ENCODE measurements at regions of chr9 and their contacts with region 1.

Region 1: DNA sequence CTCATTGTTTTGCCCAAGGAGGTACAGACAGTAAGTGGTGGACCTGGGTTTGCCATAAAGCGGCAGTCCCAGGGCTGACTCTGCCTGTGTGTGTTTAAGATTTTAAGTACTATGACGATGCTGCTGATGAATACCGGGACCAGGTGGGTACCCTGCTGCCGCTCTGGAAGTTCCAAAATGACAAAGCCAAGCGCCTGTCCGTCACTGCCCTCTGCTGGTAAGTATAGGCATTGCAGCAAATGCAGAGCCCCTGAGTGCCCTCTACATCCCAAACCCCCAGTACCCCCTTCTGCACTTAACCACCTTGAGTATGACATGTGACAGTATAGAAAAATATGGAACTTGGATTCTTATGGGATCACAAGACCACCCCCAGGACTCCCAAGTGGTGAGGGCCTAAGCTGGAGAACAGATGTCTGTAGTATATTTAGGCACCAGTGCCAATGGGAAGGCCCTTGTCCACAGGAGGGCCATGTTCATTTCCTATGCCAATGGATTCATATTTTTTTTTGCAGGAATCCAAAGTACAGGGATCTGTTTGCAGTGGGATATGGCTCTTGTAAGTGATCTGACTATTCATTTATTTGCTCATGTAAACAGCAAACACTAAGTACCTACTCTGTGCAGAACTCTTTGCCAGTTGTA is 22.0 kb downstream of the ENHO start:
- DNase-seq: no peak
- H3K4me3 ChIP-seq: no peak overlapping the region
- H3K27ac ChIP-seq: no peak overlapping the region
- H3K4me1 ChIP-seq: peaks cover 0 to 14% (median 4%) of the 10 kb centered on the region in 6 donors
- H3K27me3 ChIP-seq: peaks cover 0 to 17% (median 0%) of the 10 kb centered on the region in 7 donors
- CTCF ChIP-seq: peak; percentile 81 to 98 (median 95)
- POLR2A ChIP-seq: no peak

Region 2: DNA sequence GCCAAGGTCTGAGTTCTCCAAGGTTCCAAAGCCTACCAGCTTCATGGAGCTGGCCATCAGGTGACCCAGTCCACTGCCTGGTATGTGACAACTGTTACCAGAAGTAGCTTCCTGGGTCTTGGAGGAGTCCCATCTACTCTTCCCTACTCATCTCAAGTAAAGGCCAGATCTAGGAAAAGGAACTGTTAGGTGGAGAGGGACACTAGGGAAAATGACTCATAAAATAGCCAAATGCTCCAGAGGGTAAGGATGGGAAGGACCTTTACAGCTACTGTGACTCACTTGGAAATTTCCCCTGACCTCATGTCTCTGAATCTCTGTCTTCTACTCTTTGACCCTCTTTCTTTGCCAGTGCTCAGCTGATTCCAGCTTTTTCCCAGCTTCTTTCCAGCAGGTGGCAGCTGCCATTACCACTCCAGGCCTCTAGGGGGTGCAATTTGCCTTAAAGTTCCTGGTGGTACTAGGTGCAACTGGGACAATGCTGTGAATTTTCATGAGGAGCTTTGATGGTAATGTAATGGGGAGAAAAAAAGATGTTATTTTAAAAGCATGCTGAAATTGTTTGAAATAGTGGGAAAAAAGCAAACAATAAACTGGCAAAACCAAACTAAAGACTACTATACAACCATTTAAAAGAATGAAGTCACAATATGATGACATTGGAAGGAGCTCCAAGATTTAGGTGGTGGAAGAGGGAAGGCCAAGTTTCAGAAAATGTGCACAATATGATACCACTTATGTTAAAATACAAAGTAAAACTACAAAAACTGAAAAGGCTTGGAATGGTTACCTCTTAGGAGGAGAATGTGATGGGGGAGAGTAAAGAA is 97.0 kb before region 1 on chr9:
- intact Hi-C with region 1: loop called (anchors 10 kb)
- DNase-seq: peak; percentile 83
- H3K4me3 ChIP-seq: no peak overlapping the region
- H3K27ac ChIP-seq: no peak overlapping the region
- H3K4me1 ChIP-seq: no peaks in the 10 kb centered on the region
- H3K27me3 ChIP-seq: no peaks in the 10 kb centered on the region
- CTCF ChIP-seq: peak; percentile 85 to 97 (median 95)
- POLR2A ChIP-seq: no peak

Region 3: DNA sequence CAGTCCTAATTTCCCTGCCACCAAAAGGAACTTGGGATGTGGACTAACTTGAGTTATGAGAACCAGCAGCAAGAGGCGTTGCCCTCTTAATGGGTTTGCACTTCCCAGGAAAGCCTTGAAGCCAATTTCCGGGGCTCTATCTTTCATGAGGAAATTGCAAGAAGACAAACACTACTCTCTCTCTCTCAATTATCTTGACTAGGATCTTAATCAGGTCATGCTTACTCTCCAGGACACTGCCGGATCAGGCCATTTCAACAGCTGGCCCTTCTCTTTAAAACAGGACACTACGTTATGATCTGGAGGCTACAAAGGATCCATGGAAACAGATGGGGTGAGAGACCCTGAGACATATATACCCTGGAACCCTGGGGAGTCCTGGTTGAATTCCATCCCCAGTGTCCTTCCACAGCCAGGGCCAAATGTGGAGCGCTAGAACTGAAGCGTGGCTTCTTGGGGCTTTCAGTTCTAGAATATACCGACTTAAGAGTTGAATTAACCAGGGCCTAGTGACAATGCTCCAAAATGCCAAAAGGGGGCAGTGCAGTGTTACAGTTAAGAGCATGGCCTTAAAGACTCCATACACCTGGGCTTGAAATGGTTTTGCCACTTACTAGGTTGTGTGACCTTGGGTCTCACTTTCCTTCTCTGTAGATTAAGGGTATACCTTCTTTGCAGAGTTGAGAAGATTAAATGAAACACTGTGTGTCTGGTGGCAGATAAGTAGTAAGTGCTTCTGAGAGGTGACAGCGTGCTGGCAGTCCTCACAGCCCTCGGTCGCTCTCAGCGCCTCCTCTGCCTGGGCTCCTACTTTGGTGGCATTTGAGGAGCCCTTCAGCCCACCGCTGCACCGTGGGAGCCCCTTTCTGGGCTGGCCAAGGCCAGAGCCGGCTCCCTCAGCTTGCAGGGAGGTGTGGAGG is 63.5 kb before region 1 on chr9:
- intact Hi-C with region 1: loop called (anchors 5 kb)
- DNase-seq: no peak
- H3K4me3 ChIP-seq: no peak overlapping the region
- H3K27ac ChIP-seq: no peak overlapping the region
- H3K4me1 ChIP-seq: peaks cover 0 to 17% (median 9%) of the 10 kb centered on the region in 6 donors
- H3K27me3 ChIP-seq: no peaks in the 10 kb centered on the region
- CTCF ChIP-seq: peak; percentile 52 to 86 (median 79)
- POLR2A ChIP-seq: no peak

Measured in spleen (tissue), 13 donors.